Activated CD4-positive, alpha-beta T cell treated with anti-CD3 and anti-CD28 coated beads, Interleukin-2, amount 10 ng/mL, durations not matched to agents 24 days and 14 days (primary cell): ENCODE measurements at regions of chr22 and their contacts with region 1.

Region 1: GRCh38 chr22:30178181-30179126 is 68.1 kb downstream of the LIF start:
- DNase-seq: peak; percentile 85
- H3K4me3 Mint-ChIP-seq: peak overlapping the region; percentile 44
- H3K27ac Mint-ChIP-seq: peak overlapping the region; percentile 97
- H3K4me1 Mint-ChIP-seq: peaks cover 67% of the 10 kb centered on the region
- H3K27me3 Mint-ChIP-seq: no peaks in the 10 kb centered on the region

Region 2: DNA sequence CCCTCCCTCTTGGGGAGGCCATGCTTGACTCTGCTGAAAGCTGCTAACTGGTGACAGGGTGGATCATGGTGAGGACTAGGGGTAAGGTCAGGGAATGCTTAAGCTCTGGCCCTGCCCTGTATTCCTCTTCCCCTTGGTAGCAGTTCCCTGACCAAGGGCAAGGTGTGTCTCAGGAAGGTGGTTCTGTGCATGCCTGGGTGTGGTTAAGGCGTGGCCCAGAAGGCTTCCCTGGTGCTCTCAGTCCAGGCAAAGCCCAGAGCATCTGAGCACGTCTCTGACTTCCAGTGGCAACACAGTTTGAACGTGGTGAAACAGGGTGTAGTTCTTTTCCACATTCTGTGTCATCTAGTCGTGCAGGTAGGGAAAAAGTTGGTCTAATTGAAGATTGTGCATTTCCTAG is 151.3 kb before region 1 on chr22:
- intact Hi-C with region 1: no loop called
- DNase-seq: no peak
- H3K4me3 Mint-ChIP-seq: no peak overlapping the region
- H3K27ac Mint-ChIP-seq: no peak overlapping the region
- H3K4me1 Mint-ChIP-seq: peaks cover 17% of the 10 kb centered on the region
- H3K27me3 Mint-ChIP-seq: no peaks in the 10 kb centered on the region

Region 3: GRCh38 chr22:30104501-30105156 is 73.8 kb before region 1 on chr22:
- intact Hi-C with region 1: loop called (anchors 5 kb)
- DNase-seq: peak; percentile 79
- H3K4me3 Mint-ChIP-seq: peak overlapping the region; percentile 54
- H3K27ac Mint-ChIP-seq: peak overlapping the region; percentile 89
- H3K4me1 Mint-ChIP-seq: peaks cover 45% of the 10 kb centered on the region
- H3K27me3 Mint-ChIP-seq: no peaks in the 10 kb centered on the region

Region 4: GRCh38 chr22:30167296-30167695 is 11.2 kb before region 1 on chr22:
- intact Hi-C with region 1: loop called (anchors 1 kb)
- DNase-seq: no peak
- H3K4me3 Mint-ChIP-seq: no peak overlapping the region
- H3K27ac Mint-ChIP-seq: no peak overlapping the region
- H3K4me1 Mint-ChIP-seq: peaks cover 26% of the 10 kb centered on the region
- H3K27me3 Mint-ChIP-seq: no peaks in the 10 kb centered on the region

Region 5: DNA sequence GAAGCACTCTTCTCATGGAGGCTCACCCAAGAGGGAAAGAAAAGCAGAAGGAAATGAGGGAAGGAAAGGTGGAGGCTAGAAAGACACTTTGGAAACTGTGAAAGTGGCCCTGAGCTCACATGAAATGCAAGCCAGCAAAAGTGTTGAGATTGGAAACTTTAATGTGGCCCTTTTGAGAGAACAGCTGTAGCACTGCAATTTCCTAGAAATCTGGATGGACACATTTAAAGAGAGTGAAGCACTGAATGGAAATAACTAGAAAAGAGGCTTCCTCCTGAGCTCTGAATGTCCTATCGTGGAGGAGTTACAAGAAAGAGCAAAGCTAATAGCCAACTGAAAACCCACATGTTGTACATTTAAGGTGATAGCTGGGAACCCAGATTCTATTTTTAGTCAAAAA is 12.1 kb after region 1 on chr22:
- intact Hi-C with region 1: loop called (anchors 1 kb)
- DNase-seq: peak; percentile 68
- H3K4me3 Mint-ChIP-seq: peak overlapping the region; percentile 65
- H3K27ac Mint-ChIP-seq: peak overlapping the region; percentile 89
- H3K4me1 Mint-ChIP-seq: peaks cover 80% of the 10 kb centered on the region
- H3K27me3 Mint-ChIP-seq: no peaks in the 10 kb centered on the region

Region 6: GRCh38 chr22:30890686-30891442 is 712.4 kb after region 1 on chr22:
- intact Hi-C with region 1: no loop called
- DNase-seq: peak; percentile 76
- H3K4me3 Mint-ChIP-seq: no peak overlapping the region
- H3K27ac Mint-ChIP-seq: no peak overlapping the region
- H3K4me1 Mint-ChIP-seq: peaks cover 13% of the 10 kb centered on the region
- H3K27me3 Mint-ChIP-seq: no peaks in the 10 kb centered on the region